Motor neuron (in vitro differentiated cells): ENCODE measurements at regions of chr13 and their contacts with region 1.

Region 1: GRCh38 chr13:21638319-21639282 is 32.3 kb upstream of the FGF9 start:
- ATAC-seq: peak in 2 of 8 experiments; percentile 11 to 55
- H3K4me3 ChIP-seq: no peak overlapping the region
- H3K27ac ChIP-seq: no peak overlapping the region
- H3K4me1 ChIP-seq: peaks cover 0 to 2% of the 10 kb centered on the region in 2 donors

Region 2: DNA sequence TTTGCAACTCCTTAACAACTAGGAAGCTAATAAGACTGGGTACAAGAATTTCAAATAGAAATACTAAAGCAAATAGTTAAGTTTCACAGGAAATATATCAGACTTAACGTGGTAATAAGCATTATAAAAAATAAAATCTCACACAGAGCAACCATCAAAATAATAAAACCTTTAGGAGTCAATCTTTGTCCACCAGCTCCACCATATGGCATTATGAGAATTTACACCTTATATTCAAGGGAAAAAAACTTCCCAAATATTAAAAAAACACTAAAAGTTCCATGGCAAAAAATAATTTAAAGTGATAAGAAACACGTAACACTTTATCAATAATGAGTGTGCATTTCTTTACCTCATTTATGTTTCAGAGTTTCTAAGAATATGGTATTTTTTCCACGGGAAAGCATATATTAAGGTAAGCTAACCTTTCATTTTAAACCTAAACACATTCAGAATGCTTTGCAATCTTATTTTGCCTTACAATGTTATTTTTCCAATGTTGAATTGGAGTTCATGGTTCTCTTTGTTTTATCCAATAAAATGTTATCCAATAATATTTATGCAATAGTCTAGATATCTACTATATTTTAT is 1119.0 kb after region 1 on chr13:
- in situ Hi-C with region 1: loop called in 4 of 9 experiments (anchors 25 kb)
- ATAC-seq: peak in 2 of 8 experiments; percentile 34 to 41
- H3K4me3 ChIP-seq: no peak overlapping the region
- H3K27ac ChIP-seq: no peak overlapping the region
- H3K4me1 ChIP-seq: no peaks in the 10 kb centered on the region

Region 3: GRCh38 chr13:22793598-22794134 is 1155.1 kb after region 1 on chr13:
- in situ Hi-C with region 1: loop called in 2 of 9 experiments (anchors 25 kb)
- ATAC-seq: no peak
- H3K4me3 ChIP-seq: no peak overlapping the region
- H3K27ac ChIP-seq: no peak overlapping the region
- H3K4me1 ChIP-seq: no peaks in the 10 kb centered on the region